ENCODE measurements at regions of chr11 and their contacts with region 1.

Region 1: DNA sequence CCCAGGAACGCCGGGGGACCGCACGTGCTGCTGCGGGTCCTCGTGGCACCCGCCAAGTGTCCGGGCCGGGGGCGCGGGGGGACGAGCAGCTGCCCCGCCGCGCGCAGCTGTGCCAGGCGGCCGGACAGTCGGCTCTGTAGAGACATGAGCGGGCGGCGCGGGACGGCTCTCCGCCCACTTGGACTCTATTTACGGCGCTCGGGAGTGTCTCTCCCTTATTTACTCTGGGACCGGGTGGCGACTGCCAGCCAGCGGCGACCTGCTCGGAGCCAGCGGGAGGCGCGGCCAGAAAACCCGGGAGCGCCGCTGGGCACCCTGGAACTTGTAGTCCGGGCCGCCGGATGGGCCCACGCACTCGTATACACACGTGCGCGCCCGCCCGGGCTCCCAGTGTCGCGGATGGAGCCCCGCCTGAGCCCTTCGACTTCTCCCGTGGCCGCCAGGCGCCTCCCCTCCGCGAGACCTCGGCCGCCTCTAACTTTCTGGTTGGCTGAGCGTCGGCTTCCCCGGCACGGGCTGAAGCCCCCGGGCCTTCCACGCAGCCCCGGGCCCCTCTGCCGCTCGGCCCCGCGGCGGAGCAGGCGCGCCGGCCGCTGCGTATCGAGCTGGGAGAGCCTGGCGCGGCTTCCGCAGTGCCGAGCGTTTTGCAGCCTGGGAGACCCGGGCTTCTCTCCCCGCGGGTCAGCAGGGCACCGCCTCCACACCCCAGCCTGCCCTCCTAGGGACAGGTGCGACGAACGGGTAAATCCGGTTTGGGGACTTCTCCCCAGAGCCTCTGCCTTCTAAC is at the start of gene MACROD1:
- ATAC-seq: peak; percentile 92 to 95 (median 95)
- H3K4me3 ChIP-seq: peak within 1 kb of the TSS; percentile 45 to 66 (median 48)
- H3K27ac ChIP-seq: peak within 1 kb of the TSS in 1 of 2 donors; percentile 15
- H3K4me1 ChIP-seq: peaks cover 12 to 15% of the 10 kb centered on the region in 2 donors
- total RNA-seq, gene MACROD1: 10.2 to 47.7 (median 16.6) TPM

Region 2: DNA sequence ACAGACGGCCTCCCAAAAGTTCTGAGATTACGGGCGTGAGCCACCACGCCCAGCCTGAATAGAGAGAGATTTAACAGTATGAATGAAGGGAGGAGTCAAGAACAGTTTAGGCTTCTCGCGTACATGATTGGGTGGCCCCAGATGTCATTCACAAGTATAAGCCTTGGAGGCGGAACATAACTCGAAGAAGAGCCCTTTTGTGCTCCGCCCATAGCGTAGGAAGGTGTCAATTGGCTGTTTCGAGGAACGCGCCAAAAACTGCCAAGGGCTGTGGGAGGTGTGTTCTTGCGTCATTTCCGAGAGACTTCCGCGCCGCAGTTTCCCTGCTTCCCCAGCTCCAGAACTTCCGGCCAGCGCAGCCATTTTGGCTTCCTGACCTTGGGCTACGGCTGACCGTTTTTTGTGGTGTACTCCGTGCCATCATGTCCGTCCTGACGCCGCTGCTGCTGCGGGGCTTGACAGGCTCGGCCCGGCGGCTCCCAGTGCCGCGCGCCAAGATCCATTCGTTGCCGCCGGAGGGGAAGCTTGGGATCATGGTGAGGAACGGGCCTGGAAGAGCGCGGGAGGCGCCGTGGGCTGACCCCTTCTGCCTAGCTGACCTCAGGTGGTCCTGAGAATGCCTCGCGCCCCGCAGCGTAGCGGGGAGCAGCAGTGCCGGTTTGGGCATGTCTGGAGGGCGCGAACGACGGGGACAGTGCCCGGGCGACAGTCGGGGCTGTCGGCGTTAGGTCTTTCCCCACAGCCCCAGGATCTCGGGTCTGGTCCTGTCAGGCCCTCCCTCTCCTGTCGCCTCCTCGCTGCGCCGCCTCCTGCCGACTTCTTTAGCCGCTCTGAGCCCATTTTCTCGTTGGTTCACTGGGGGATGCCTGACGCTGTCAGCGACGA is 191.5 kb before region 1 on chr11 and contains the start of gene COX8A:
- in situ Hi-C with region 1: loop called in 3 of 9 experiments (anchors 25 kb)
- ATAC-seq: peak; percentile 92 to 97 (median 96)
- H3K4me3 ChIP-seq: peak within 1 kb of the TSS; percentile 79 to 90 (median 80)
- H3K27ac ChIP-seq: peak within 1 kb of the TSS; percentile 96 to 97
- H3K4me1 ChIP-seq: peaks cover 21 to 23% of the 10 kb centered on the region in 2 donors
- total RNA-seq, gene COX8A: 475 to 790 (median 563) TPM